Mammary epithelial cell (primary cell): ENCODE measurements at regions of chr10 and their contacts with region 1.

Region 1: DNA sequence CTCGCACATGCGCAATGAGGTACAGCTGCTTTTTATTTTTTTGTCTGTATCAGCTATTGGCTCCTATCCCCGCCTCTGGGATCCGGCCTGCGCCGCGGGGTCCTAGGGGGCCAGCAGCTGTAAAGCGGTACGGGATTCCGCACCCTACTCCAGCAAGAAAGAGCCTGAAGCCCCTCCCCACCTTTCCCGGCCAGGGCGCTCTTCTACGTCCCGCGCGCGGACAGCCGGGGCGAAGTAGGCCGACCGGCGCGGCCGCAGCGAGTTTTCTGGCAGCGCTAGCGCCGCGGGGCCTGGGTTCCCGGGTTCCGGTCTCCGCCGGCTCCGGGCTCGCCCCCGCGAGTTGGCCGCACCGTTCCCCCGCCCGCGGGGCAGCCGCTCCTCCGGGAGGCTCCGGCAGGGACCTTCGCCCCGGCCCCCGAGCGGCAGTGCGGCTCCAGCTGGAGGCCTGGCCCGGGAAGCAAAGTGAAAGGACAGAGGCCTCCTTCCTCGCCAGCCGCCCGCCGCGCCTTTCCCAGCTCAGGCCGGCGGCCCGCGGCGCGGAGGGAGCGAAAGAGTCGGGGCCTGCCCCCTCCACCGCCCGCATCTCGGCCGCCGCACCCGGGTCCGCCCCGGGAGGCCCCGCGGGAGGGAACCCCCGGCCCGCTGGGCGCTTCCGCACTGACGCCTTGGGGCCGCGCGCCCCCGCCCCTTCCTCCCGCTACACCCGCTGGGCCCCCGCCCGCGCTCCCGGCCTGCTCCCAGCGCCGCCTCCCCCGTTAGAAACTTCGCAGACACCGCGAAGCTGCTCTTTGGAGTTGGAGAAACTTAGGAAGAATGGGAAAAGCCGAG is 4.7 kb upstream of the SPAG6 start:
- DNase-seq: peak; percentile 71
- H3K4me3 ChIP-seq: peak overlapping the region; percentile 71 to 87 (median 83)
- H3K27ac ChIP-seq: peak overlapping the region; percentile 69
- H3K4me1 ChIP-seq: peaks cover 21% of the 10 kb centered on the region
- H3K27me3 ChIP-seq: peaks cover 55% of the 10 kb centered on the region
- CTCF ChIP-seq: no peak

Region 2: DNA sequence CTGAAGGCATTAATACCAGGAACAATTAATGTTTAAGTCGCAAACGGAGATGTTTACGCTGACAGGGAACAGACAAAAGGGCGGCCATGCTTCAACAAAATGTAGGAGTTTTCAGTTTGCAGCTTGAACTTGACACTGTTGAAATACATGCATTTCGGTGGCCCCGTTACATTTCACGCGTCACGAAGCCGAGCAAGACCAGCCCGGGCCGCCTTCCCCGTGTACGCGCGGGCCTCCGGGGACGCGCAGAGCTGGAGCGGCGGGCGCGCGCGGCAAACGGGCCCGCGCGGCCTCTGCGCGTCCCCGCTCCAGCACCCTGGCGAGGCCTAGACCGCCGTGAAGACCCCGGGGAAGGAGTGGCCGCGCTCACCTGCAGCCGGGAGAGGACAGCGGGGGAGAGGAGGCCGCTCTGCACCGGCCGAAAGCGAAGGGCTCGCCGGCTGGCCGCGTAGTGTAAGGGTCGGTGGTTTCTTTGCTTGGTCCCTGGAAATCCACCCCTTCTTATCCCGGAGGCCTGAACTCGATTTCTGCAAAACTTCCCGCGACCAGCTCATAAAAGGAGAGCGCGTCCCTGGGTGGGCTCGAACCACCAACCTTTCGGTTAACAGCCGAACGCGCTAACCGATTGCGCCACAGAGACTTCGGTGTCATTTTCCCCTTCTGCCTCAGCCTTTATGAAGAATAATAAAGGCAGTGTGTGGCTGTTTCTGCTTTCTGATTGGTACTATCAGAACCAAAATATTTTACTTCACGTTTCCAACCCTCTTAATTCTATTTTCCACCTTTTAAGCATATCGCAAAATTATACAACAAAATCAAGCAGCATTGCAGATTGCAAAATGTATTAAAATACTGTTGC is 111.4 kb before region 1 on chr10:
- CTCF ChIA-PET with region 1: no interaction called
- dilution Hi-C with region 1: no loop called
- in situ Hi-C with region 1: no loop called
- intact Hi-C with region 1: loop called (anchors 1 kb)
- DNase-seq: peak; percentile 89
- H3K4me3 ChIP-seq: peak overlapping the region; percentile 74 to 90 (median 88)
- H3K27ac ChIP-seq: peak overlapping the region; percentile 15
- H3K4me1 ChIP-seq: no peaks in the 10 kb centered on the region
- H3K27me3 ChIP-seq: peaks cover 3% of the 10 kb centered on the region
- CTCF ChIP-seq: no peak

Region 3: DNA sequence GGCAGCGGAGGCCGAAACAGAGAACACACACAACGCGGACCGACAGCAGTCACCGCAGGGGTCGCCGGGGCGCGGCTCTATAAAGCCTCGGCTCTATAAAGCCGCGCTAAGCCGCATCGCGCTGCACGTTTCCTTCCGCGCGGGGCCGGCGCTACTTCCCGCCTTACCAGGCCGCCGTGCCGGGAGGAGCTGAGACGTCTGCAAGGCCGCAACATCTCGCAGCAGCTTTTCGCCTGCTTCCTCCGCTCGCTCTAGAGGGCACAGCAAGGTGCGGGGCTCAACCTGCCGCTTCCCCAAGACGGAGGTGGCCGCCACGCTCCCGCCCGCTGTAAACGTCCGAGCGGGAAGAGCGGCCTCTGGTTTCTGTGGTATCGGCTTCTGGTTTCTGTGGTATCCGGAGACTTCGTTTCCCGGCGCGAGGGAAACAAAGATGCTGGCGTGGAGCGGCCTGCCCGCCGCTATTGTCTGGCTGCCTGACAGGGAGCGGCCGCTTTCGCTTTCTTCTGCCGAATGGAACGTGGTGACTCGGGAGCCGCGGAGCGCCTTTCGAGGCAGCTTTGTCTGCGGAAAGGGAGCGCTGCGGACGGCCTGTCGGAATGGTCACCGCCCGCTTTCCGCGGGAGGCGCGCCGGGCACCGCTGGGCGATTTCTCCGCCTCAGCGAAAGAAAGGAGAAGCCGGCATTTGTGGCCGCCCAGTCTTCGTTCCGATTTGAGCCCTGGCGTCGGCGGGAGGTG is 96.5 kb after region 1 on chr10:
- CTCF ChIA-PET with region 1: no interaction called
- dilution Hi-C with region 1: no loop called
- in situ Hi-C with region 1: no loop called
- intact Hi-C with region 1: loop called (anchors 2 kb)
- DNase-seq: peak; percentile 77
- H3K4me3 ChIP-seq: peak overlapping the region; percentile 62 to 67 (median 66)
- H3K27ac ChIP-seq: peak overlapping the region; percentile 66
- H3K4me1 ChIP-seq: peaks cover 34% of the 10 kb centered on the region
- H3K27me3 ChIP-seq: no peaks in the 10 kb centered on the region
- CTCF ChIP-seq: peak in 1 of 2 donors; percentile 37

Region 4: DNA sequence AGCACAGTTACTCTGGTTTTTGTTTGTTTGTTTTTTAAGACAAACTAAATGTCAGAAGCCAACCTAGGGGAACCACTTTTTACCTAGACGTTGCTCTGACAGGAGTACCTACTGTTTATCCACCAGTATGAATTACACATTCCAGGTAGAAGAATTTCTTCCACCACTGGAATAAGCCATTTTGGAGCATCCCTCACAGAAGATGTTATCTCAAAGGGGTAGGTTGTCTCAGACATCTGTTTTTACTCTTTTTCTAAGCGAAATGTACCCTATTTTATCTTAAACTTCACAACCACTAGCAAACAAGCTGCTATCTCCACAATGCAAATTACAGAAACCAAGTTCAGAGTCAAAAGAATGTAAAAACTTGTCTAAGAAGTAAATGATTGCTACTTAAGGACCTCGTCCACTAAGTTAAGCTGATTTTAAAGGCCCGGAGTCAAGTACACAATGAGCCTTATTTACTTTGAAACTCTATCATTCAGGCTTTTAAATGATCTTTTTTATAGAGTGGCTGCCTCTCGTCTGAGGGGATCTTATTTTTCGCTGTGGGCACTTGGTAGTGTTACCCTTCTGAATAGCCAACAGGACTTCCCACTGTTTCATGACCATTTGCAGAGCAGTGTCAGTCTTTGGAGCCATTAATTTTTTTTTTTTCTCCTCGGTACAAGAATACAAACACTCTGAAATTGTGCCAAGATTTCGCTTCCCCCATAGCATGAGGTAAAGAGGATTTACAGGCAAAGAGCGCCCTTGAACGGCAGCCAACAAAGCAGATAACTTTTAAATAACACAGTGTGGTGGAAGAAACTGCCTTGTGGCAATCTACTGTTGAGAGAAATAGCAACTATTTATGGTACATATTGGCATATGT is 571.5 kb after region 1 on chr10:
- CTCF ChIA-PET with region 1: no interaction called
- dilution Hi-C with region 1: no loop called
- in situ Hi-C with region 1: no loop called
- intact Hi-C with region 1: no loop called
- DNase-seq: no peak
- H3K4me3 ChIP-seq: no peak overlapping the region
- H3K27ac ChIP-seq: no peak overlapping the region
- H3K4me1 ChIP-seq: no peaks in the 10 kb centered on the region
- H3K27me3 ChIP-seq: peaks cover 4% of the 10 kb centered on the region
- CTCF ChIP-seq: no peak